GM12878 (cell line): ENCODE measurements at regions of chr1 and their contacts with region 1.

Region 1: GRCh38 chr1:23634842-23635651 is 56.6 kb upstream of the RPL11 start:
- DNase-seq: peak; percentile 66
- ATAC-seq: peak; percentile 80
- H3K4me3 ChIP-seq: peak overlapping the region; percentile 41; the same call in 1 of the 2 replicates
- H3K27ac ChIP-seq: peak overlapping the region; percentile 62
- H3K4me1 ChIP-seq: peaks cover 12% of the 10 kb centered on the region
- H3K27me3 ChIP-seq: no peaks in the 10 kb centered on the region
- CTCF ChIP-seq: peak; percentile 82 to 97 (median 84)
- EP300 ChIP-seq: no peak
- POLR2A ChIP-seq: no peak
- RAD21 ChIP-seq: peak; percentile 88

Region 2: DNA sequence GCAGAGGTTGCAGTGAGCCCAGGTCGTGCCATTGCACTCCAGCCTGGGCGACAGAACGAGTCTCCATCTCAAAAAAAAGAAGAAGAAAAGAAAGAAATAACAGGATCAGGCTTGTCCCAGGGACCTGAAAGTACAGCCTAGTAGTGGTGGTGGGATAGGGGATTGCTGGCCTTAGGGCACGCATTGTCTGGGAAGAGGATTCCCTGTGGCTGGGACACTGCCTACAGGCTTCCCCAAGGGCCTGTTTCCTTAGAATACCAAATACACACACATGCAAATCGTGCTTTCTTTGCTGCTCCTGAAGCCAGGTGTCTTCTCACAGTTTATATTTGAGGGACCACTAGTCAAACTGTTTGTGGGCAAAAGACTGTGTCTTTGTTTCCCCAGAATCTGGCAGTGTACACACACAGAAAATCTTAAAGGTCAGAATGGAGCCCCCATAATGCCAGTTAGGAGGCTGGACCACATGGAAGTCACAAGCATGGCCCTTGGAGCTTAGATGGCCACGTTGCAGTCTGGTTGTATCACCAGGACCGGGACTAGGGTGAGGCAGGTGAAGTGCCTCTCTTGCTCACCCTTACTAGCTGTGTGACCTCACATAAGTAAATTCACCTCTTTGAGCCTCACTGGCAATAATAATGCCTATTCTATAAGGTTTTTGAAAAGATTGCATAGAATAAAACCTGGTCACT is 138.4 kb before region 1 on chr1:
- CTCF ChIA-PET with region 1: interaction called, 103 read pairs
- POLR2A ChIA-PET with region 1: interaction called, 5 read pairs
- RAD21 ChIA-PET with region 1: interaction called, 66 read pairs
- SMC1A ChIA-PET with region 1: interaction called, 26 read pairs
- in situ Hi-C with region 1: loop called (anchors 5 kb)
- intact Hi-C with region 1: loop called (anchors 2 kb)
- DNase-seq: no peak
- ATAC-seq: peak; percentile 26; the same call in 2 of the 3 replicates
- H3K4me3 ChIP-seq: no peak overlapping the region
- H3K27ac ChIP-seq: no peak overlapping the region
- H3K4me1 ChIP-seq: no peaks in the 10 kb centered on the region
- H3K27me3 ChIP-seq: no peaks in the 10 kb centered on the region
- CTCF ChIP-seq: no peak
- EP300 ChIP-seq: no peak
- POLR2A ChIP-seq: no peak
- RAD21 ChIP-seq: no peak

Region 3: GRCh38 chr1:23539698-23540266 is 95.3 kb before region 1 on chr1:
- CTCF ChIA-PET with region 1: interaction called, 959 read pairs
- POLR2A ChIA-PET with region 1: interaction called, 10 read pairs
- RAD21 ChIA-PET with region 1: interaction called, 561 read pairs
- SMC1A ChIA-PET with region 1: interaction called, 584 read pairs
- in situ Hi-C with region 1: no loop called
- intact Hi-C with region 1: loop called (anchors 1 kb)
- DNase-seq: peak; percentile 92
- ATAC-seq: peak; percentile 93
- H3K4me3 ChIP-seq: no peak overlapping the region
- H3K27ac ChIP-seq: no peak overlapping the region
- H3K4me1 ChIP-seq: peaks cover 7% of the 10 kb centered on the region
- H3K27me3 ChIP-seq: no peaks in the 10 kb centered on the region
- CTCF ChIP-seq: peak; percentile 96 to 99 (median 99); a peak in 5 of 6 replicates
- EP300 ChIP-seq: peak in 1 of 2 experiments; percentile 33; a peak in 1 of 4 replicates
- POLR2A ChIP-seq: no peak
- RAD21 ChIP-seq: peak; percentile 98

Region 4: GRCh38 chr1:23577056-23578004 is 57.7 kb before region 1 on chr1:
- CTCF ChIA-PET with region 1: interaction called, 26 read pairs
- POLR2A ChIA-PET with region 1: interaction called, 21 read pairs
- RAD21 ChIA-PET with region 1: interaction called, 25 read pairs
- SMC1A ChIA-PET with region 1: interaction called, 31 read pairs
- in situ Hi-C with region 1: no loop called
- intact Hi-C with region 1: loop called (anchors 1 kb)
- DNase-seq: peak; percentile 92
- ATAC-seq: peak; percentile 80
- H3K4me3 ChIP-seq: peak overlapping the region; percentile 61; the same call in 1 of the 2 replicates
- H3K27ac ChIP-seq: peak overlapping the region; percentile 96
- H3K4me1 ChIP-seq: peaks cover 53% of the 10 kb centered on the region
- H3K27me3 ChIP-seq: no peaks in the 10 kb centered on the region
- CTCF ChIP-seq: no peak
- EP300 ChIP-seq: peak; percentile 75 to 85; a peak in 3 of 4 replicates
- POLR2A ChIP-seq: 0 out of 2 replicates have a peak, but pooled peaks have one; percentile 20
- RAD21 ChIP-seq: peak; percentile 31; the same call in 1 of the 2 replicates

Region 5: DNA sequence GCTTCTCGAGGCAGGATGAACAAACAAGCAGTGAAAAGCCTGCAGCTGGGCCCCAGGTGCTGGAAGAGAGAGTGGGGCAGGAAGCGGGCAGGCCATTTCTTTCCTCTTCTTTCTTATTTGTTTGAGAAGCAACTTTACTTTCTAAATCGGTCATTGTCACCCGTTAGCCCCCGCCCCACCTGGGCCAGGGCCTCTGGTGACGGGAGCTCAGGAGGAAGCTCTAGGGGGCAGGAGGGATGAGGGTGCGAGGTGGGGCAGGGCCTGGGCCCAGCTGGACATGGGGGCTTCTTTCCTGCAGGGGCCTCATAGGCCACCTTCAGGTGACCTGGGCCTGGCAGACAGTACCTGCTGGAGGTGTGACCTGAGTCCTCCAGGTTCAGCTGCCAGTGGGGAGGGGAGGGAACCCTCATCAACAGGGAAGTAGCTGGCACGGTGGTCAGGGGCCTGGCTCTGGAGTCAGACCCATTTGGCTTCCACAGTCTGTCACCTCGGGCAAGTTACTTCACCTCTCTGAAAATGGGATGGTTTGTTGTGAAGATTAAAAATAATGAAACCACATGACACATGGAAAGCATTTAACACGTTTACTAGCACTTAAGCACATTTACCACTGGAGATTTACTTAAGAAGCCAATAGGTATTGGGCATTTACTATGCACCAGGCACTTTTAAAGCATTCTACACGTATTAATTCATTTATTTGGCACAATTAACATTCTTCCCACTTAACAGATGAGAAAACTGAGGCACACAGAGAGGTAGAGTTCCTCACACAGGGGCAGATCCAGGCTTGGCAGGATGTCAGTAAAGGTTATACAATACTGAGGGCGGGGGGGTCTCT is 21.6 kb before region 1 on chr1:
- CTCF ChIA-PET with region 1: interaction called, 34 read pairs
- POLR2A ChIA-PET with region 1: no interaction called
- RAD21 ChIA-PET with region 1: interaction called, 10 read pairs
- SMC1A ChIA-PET with region 1: interaction called, 27 read pairs
- in situ Hi-C with region 1: no loop called
- intact Hi-C with region 1: no loop called
- DNase-seq: no peak
- ATAC-seq: peak; percentile 63
- H3K4me3 ChIP-seq: no peak overlapping the region; the same call in 1 of the 2 replicates
- H3K27ac ChIP-seq: peak overlapping the region; percentile 80
- H3K4me1 ChIP-seq: peaks cover 37% of the 10 kb centered on the region
- H3K27me3 ChIP-seq: no peaks in the 10 kb centered on the region
- CTCF ChIP-seq: 0 out of 6 replicates have a peak, but pooled peaks of 1 of the 3 experiments have one; percentile 9
- EP300 ChIP-seq: no peak
- POLR2A ChIP-seq: no peak
- RAD21 ChIP-seq: no peak

Region 6: GRCh38 chr1:23664837-23665795 is 30.1 kb after region 1 on chr1:
- CTCF ChIA-PET with region 1: interaction called, 9 read pairs
- POLR2A ChIA-PET with region 1: interaction called, 3 read pairs
- RAD21 ChIA-PET with region 1: interaction called, 17 read pairs
- SMC1A ChIA-PET with region 1: interaction called, 13 read pairs
- in situ Hi-C with region 1: no loop called
- intact Hi-C with region 1: no loop called
- DNase-seq: peak; percentile 15
- ATAC-seq: peak; percentile 89
- H3K4me3 ChIP-seq: no peak overlapping the region
- H3K27ac ChIP-seq: no peak overlapping the region
- H3K4me1 ChIP-seq: peaks cover 6% of the 10 kb centered on the region; the same call in 1 of the 2 replicates
- H3K27me3 ChIP-seq: no peaks in the 10 kb centered on the region
- CTCF ChIP-seq: peak; percentile 6 to 45 (median 23); a peak in 3 of 6 replicates
- EP300 ChIP-seq: no peak
- POLR2A ChIP-seq: no peak
- RAD21 ChIP-seq: peak; percentile 41

Region 7: GRCh38 chr1:23854568-23854967 is 219.5 kb after region 1 on chr1:
- CTCF ChIA-PET with region 1: no interaction called
- POLR2A ChIA-PET with region 1: no interaction called
- RAD21 ChIA-PET with region 1: no interaction called
- SMC1A ChIA-PET with region 1: no interaction called
- in situ Hi-C with region 1: no loop called
- intact Hi-C with region 1: no loop called
- DNase-seq: no peak
- ATAC-seq: peak; percentile 68
- H3K4me3 ChIP-seq: no peak overlapping the region
- H3K27ac ChIP-seq: no peak overlapping the region
- H3K4me1 ChIP-seq: no peaks in the 10 kb centered on the region
- H3K27me3 ChIP-seq: no peaks in the 10 kb centered on the region
- CTCF ChIP-seq: peak in 2 of 3 experiments; percentile 20 to 45; a peak in 3 of 6 replicates
- EP300 ChIP-seq: no peak
- POLR2A ChIP-seq: no peak
- RAD21 ChIP-seq: peak; percentile 35

Region 8: DNA sequence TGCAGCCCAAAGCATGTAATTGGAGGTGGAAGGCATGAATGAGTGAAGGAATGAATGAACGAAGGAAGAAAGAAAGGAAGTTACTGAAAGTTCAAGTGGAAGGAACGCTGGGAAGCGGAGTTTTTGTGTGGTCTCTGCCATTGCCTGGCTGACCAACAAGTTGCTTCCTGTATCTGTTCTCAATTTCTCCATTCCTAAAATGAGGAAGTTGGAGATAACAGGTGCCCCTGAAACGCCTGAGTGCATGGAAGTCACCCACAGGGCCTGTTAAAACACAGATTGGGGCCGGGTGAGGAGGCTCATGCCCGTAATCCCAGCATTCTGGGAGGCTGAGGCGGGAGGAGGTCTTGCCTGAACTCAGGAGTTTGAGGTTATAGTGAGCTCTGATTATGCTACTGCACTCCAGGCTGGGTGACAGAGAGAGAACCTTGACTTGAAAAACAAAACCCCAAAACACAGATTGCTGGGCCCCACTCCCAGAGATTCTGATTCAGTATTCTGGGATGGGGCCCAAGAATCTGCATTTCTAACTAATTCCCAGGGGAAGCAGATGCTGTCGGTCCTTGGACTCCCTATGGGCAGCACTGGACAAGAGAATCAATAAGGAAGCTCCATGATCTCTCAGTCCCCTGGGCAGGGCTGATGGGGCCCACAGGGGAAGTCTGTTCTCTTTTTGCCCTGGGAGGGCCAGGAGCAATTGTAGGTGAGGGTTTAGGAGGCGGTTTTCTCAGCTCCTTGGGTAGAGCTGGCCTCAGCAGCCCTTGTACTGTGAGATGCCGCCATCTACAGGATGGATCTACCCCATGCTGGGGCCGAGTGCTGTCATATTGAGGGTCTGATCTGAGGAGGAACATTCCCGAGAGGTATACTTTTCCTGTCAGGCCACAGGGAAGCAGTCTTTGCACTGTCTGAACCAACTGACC is 281.4 kb after region 1 on chr1:
- CTCF ChIA-PET with region 1: interaction called, 7 read pairs
- POLR2A ChIA-PET with region 1: no interaction called
- RAD21 ChIA-PET with region 1: interaction called, 10 read pairs
- SMC1A ChIA-PET with region 1: interaction called, 5 read pairs
- in situ Hi-C with region 1: no loop called
- intact Hi-C with region 1: no loop called
- DNase-seq: peak; percentile 53
- ATAC-seq: peak; percentile 90
- H3K4me3 ChIP-seq: no peak overlapping the region
- H3K27ac ChIP-seq: peak overlapping the region; percentile 71
- H3K4me1 ChIP-seq: peaks cover 31% of the 10 kb centered on the region
- H3K27me3 ChIP-seq: no peaks in the 10 kb centered on the region
- CTCF ChIP-seq: peak; percentile 86 to 94 (median 88)
- EP300 ChIP-seq: no peak
- POLR2A ChIP-seq: no peak
- RAD21 ChIP-seq: peak; percentile 96